CD4-positive, alpha-beta T cell (primary cell): ENCODE measurements at regions of chr15 and their contacts with region 1.

Region 1: GRCh38 chr15:101242160-101242998 is 9.5 kb downstream of the CHSY1 start:
- DNase-seq: peak in 12 of 14 experiments; percentile 17 to 91 (median 40)
- ATAC-seq: peak; percentile 91
- H3K4me3 ChIP-seq: peak overlapping the region; percentile 35
- H3K4me3 Mint-ChIP-seq: peak overlapping the region; percentile 59
- H3K27ac ChIP-seq: peak overlapping the region in 1 of 2 donors; percentile 14
- H3K27ac Mint-ChIP-seq: peak overlapping the region; percentile 81
- H3K4me1 ChIP-seq: peaks cover 62% of the 10 kb centered on the region
- H3K4me1 Mint-ChIP-seq: peaks cover 88% of the 10 kb centered on the region
- H3K27me3 ChIP-seq: no peaks in the 10 kb centered on the region
- H3K27me3 Mint-ChIP-seq: no peaks in the 10 kb centered on the region
- CTCF ChIP-seq: no peak

Region 2: DNA sequence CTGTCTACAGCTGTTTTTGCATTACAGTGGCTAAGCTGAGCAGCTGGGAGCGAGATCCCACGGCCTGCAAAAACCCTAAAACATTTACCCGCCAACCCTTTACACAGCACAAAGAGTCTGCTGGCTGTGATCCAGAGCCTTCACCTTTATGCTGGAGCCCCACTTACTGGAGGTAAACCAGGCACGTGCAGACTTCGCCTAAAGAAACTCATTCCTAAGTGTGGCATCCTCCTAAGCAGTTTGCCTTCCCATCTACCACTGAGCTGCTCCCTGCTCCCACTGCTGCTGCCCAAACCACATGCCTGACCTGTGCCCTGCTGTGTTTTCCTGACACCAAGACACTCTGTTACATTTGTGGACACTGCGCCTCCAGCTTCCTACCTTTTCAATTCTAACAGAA is 43.6 kb before region 1 on chr15:
- CTCF ChIA-PET with region 1: no interaction called
- POLR2A ChIA-PET with region 1: interaction called, 3 read pairs
- intact Hi-C with region 1: loop called in 1 of 2 experiments (anchors 5 kb)
- DNase-seq: no peak
- ATAC-seq: no peak
- H3K4me3 ChIP-seq: no peak overlapping the region
- H3K4me3 Mint-ChIP-seq: no peak overlapping the region
- H3K27ac ChIP-seq: no peak overlapping the region
- H3K27ac Mint-ChIP-seq: no peak overlapping the region
- H3K4me1 ChIP-seq: peaks cover 47% of the 10 kb centered on the region
- H3K4me1 Mint-ChIP-seq: peaks cover 73% of the 10 kb centered on the region
- H3K27me3 ChIP-seq: no peaks in the 10 kb centered on the region
- H3K27me3 Mint-ChIP-seq: no peaks in the 10 kb centered on the region
- CTCF ChIP-seq: no peak

Region 3: DNA sequence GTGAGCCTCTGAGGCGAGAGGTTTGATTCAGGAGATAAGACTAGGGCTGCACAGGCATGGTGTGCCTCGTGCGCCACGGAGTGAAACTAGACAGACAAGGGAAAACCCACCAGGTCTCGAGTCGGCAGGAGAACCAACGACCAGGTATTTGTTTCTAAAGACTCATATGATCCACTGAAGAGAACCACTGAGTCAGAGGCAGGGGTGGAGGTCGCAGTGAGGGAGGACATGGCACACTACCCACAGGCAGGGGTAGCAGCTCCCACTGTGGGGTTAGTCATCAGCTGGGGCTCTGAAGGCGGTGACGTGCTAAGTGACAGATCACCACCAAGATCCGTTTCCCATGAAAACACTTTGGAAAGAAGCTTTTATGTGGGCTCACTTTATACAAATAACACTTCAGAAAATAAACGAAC is 36.2 kb before region 1 on chr15:
- CTCF ChIA-PET with region 1: interaction called, 4 read pairs
- POLR2A ChIA-PET with region 1: interaction called, 3 read pairs
- intact Hi-C with region 1: loop called in 1 of 2 experiments (anchors 5 kb)
- DNase-seq: peak; percentile 14 to 80 (median 58)
- ATAC-seq: peak; percentile 93
- H3K4me3 ChIP-seq: peak overlapping the region; percentile 35
- H3K4me3 Mint-ChIP-seq: peak overlapping the region; percentile 85
- H3K27ac ChIP-seq: no peak overlapping the region
- H3K27ac Mint-ChIP-seq: peak overlapping the region; percentile 76
- H3K4me1 ChIP-seq: peaks cover 17% of the 10 kb centered on the region
- H3K4me1 Mint-ChIP-seq: peaks cover 76% of the 10 kb centered on the region
- H3K27me3 ChIP-seq: no peaks in the 10 kb centered on the region
- H3K27me3 Mint-ChIP-seq: no peaks in the 10 kb centered on the region
- CTCF ChIP-seq: no peak